Activated CD8-positive, alpha-beta memory T cell treated with anti-CD3 and anti-CD28 coated beads, Interleukin-2, amount 10 ng/mL, durations not matched to agents 7 days and 5 days (primary cell): ENCODE measurements at regions of chr3 and their contacts with region 1.

Region 1: GRCh38 chr3:186617038-186617946 is 4.4 kb downstream of the AHSG start:
- DNase-seq: peak; percentile 89
- ATAC-seq: peak; percentile 98
- H3K4me3 Mint-ChIP-seq: peak overlapping the region; percentile 26
- H3K27ac Mint-ChIP-seq: no peak overlapping the region
- H3K4me1 Mint-ChIP-seq: peaks cover 21% of the 10 kb centered on the region
- H3K27me3 Mint-ChIP-seq: peaks cover 50% of the 10 kb centered on the region

Region 2: GRCh38 chr3:185942907-185943759 is 674.2 kb before region 1 on chr3:
- CTCF ChIA-PET with region 1: interaction called, 22 read pairs
- DNase-seq: peak; percentile 91
- ATAC-seq: peak; percentile 95
- H3K4me3 Mint-ChIP-seq: no peak overlapping the region
- H3K27ac Mint-ChIP-seq: no peak overlapping the region
- H3K4me1 Mint-ChIP-seq: peaks cover 24% of the 10 kb centered on the region
- H3K27me3 Mint-ChIP-seq: peaks cover 19% of the 10 kb centered on the region

Region 3: DNA sequence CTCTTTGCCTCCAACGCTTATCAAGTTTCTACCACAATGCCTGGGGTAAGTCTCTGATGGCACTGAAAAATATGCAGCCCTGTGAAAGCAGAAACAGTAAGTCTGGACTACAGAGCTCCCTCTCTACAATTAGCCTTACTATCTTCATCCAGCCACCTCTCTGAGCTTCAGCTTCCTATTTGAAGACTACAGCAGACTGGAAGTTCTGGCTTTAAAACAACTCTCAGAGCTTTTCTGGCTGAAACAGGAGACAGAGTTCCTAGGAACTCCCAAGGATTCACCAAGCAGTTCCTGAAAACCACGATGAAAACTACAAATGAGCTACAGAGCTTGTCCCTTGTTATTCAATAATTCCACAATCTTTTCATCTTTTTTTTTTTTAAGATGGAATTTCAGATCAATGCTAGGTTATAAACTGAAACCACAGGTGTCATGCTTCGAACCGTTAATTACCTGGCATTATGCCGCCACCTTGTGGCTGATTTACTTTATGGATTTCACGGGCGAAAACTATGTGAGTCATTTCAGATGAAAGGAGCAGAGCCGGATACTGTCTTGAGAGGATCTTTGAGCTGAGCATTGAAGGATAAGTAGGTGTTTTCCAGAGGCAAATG is 77.0 kb before region 1 on chr3:
- CTCF ChIA-PET with region 1: interaction called, 26 read pairs
- DNase-seq: peak; percentile 87
- ATAC-seq: peak; percentile 93
- H3K4me3 Mint-ChIP-seq: no peak overlapping the region
- H3K27ac Mint-ChIP-seq: peak overlapping the region; percentile 5
- H3K4me1 Mint-ChIP-seq: peaks cover 15% of the 10 kb centered on the region
- H3K27me3 Mint-ChIP-seq: no peaks in the 10 kb centered on the region

Region 4: GRCh38 chr3:186588337-186589006 is 28.8 kb before region 1 on chr3:
- CTCF ChIA-PET with region 1: interaction called, 47 read pairs
- DNase-seq: no peak
- ATAC-seq: peak; percentile 63
- H3K4me3 Mint-ChIP-seq: no peak overlapping the region
- H3K27ac Mint-ChIP-seq: no peak overlapping the region
- H3K4me1 Mint-ChIP-seq: peaks cover 20% of the 10 kb centered on the region
- H3K27me3 Mint-ChIP-seq: no peaks in the 10 kb centered on the region

Region 5: DNA sequence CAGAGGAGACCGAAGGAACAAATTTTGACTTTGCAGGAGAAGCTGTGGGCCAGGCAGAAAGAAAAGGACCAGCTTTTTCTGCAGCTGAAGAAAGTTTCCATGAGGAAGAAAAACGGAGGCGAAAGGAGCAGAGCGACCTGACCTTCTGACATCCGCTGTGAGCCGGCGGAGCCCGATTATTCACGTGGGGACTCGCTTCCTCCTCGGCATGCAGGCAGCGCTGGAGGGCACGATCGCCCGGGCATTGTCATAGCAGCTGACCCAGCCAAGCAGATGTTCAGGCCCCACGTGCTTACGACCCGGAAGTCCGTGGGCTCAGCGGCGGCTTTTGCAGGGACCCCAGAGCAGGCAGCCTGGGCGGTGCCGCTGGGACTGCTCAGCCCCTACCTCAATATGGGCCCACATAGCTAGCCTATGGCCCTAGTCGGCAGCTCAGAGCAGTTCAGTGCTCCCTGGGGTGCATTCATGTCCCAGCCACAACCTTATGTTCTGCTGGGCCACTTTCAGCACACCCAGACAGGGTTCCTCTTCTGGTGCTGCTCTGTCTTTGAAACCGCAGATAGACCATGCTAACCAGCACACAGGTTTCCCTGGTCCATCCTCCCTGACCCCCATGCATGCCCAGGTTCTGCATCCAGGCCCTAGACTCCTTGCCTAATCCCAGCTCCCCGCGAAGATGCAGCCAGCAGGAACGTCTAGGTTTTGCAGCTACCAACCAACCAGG is 155.6 kb after region 1 on chr3:
- CTCF ChIA-PET with region 1: interaction called, 10 read pairs
- DNase-seq: peak; percentile 88
- ATAC-seq: peak; percentile 95
- H3K4me3 Mint-ChIP-seq: peak overlapping the region; percentile 78
- H3K27ac Mint-ChIP-seq: peak overlapping the region; percentile 88
- H3K4me1 Mint-ChIP-seq: peaks cover 22% of the 10 kb centered on the region
- H3K27me3 Mint-ChIP-seq: no peaks in the 10 kb centered on the region

Region 6: DNA sequence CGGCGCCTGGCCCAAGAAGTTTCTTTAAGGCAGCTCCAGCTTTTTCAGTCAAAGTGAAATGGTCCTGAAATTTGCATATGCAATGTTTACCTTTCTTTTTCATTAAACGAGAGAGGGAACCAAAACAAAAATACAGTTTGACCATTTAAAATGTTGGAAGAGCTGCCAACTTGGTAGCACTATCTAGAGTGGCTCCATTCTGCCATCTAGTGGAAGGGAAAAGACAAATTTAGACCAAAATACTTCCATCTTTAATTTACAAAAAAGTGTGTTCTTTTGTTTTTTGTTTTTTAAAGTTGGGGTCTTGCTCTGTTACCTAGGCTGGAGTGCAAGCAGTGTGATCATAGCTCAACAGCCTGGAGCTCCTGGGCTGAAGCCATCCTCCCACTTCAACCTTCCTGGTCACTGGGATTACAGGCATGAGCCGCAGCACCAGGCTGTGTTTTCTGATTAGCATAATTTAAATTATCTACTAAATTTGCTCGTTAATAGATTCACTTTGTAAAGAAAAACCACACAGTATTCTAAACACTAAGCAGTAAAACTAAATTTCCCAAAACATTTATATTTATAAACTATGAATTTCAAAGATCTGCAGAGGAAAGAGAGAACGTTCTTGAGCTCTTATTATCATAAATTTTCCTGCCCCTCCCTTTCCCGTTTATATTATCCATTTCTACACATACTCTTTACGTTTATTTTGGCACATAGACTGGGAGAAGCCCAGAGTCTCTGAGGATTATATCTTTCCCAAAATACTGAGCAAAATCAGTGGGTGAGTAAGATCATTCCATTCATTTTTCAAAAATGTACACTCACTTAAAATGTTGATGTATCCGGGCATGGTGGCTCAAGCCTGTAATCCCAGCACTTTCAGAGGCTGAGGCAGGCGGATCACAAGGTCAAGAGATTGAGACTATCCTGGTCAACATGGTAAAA is 204.4 kb after region 1 on chr3:
- CTCF ChIA-PET with region 1: interaction called, 106 read pairs
- DNase-seq: peak; percentile 39
- ATAC-seq: peak; percentile 31
- H3K4me3 Mint-ChIP-seq: no peak overlapping the region
- H3K27ac Mint-ChIP-seq: no peak overlapping the region
- H3K4me1 Mint-ChIP-seq: peaks cover 26% of the 10 kb centered on the region
- H3K27me3 Mint-ChIP-seq: peaks cover 2% of the 10 kb centered on the region